ENCODE measurements at regions of chr7 and their contacts with region 1.

Region 1: DNA sequence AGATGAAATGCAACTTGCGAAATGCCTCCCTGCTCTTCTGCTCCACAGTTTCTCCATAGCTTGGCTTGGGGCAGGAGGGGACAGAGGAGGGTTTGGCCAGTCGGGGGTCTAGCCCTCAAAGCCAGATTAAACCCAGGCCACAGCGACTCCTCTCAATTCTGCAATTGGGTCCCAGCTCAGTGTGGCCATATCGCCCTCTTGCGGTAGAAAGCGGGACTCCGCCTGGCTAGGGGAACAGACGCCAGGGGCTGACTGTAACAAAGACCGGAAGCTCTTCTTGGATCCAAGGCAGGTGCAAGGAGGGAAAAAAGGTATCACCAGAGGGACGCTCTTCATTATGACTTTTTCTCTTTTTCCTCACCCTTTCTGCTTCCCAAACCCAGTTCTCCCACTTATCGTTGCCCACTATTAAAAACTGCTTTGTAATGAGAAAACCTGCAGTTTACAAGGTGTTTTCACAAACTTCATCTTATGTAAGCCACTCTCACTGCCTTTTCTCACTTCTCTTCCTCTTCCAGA is 36.6 kb upstream of the TNPO3 start:
- DNase-seq: peak; percentile 94

Region 2: DNA sequence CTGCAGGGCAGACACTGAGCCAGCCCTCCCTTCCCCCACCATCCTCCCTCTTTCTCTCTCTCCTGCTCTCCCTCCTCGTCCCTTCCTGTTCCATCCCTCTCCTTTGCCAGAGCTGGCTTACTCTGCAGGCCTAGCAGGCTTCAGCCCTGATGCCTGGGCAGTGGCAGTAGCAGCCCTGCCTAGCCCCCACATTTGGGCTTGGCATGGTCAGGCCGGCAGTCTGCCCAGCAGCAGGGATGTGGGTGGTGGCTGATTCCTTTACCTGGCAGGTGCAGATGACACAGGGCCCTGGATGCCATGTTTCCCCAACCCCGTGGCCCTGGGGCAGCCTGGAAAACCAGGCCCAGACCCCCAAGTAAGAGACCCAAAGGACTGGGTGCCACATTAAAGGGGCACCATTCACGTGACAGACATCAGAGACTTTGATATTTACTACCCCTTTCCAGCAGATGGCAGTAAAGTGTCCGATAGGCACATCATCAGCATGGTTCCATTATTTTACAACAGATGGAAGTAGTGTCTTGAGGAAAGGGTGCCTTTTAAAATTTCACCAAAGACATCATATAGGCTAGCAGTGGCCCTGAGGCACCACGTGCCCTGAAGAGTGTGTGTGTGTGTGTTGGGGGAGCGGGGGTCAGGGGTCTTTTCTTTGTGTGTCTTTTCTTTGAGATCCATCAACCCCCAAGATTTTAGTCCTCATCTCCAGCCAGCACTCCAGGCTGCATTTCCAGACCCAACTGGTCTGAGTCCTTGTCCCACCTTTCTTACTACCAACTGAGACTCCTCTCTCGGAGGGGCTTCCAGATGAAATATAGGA is 187.0 kb before region 1 on chr7:
- intact Hi-C with region 1: loop called in 1 of 2 experiments (anchors 10 kb)
- DNase-seq: peak; percentile 53

Region 3: GRCh38 chr7:128909625-128910257 is 181.8 kb before region 1 on chr7:
- intact Hi-C with region 1: loop called (anchors 5 to 10 kb)
- DNase-seq: peak; percentile 80

Region 4: GRCh38 chr7:129103561-129104324 is 12.2 kb after region 1 on chr7:
- intact Hi-C with region 1: loop called in 1 of 2 experiments (anchors 1 kb)
- DNase-seq: no peak